Dorsolateral prefrontal cortex (tissue), 120 donors: ENCODE measurements at regions of chrX and their contacts with region 1.

Region 1: GRCh38 chrX:56994375-56995270 is 718 bp downstream of the SPIN3 start:
- DNase-seq: peak in 4 of 10 donors; percentile 9 to 39 (median 23)
- H3K4me3 ChIP-seq: peak overlapping the region; percentile 37 to 82 (median 67)
- H3K27ac ChIP-seq: peak overlapping the region in 51 of 59 donors; percentile 7 to 86 (median 70)
- H3K27me3 ChIP-seq: peaks cover 0 to 48% (median 8%) of the 10 kb centered on the region in 45 donors
- CTCF ChIP-seq: no peak

Region 2: GRCh38 chrX:57121162-57121741 is 126.6 kb after region 1 on chrX and contains the start of gene SPIN2B:
- intact Hi-C with region 1: loop called in 1 of 2 experiments (anchors 5 kb)
- DNase-seq: peak; percentile 52 to 84 (median 76)
- H3K4me3 ChIP-seq: peak within 1 kb of the TSS; percentile 34 to 80 (median 63)
- H3K27ac ChIP-seq: peak within 1 kb of the TSS in 45 of 59 donors; percentile 15 to 86 (median 68)
- H3K27me3 ChIP-seq: peaks cover 0 to 17% (median 0%) of the 10 kb centered on the region in 45 donors
- CTCF ChIP-seq: peak in 2 of 56 donors; percentile 24 to 26
- total RNA-seq, gene SPIN2B: 9.7 to 29.0 (median 19.7) TPM